Caco-2 (cell line): ENCODE measurements at regions of chr17 and their contacts with region 1.

Region 1: DNA sequence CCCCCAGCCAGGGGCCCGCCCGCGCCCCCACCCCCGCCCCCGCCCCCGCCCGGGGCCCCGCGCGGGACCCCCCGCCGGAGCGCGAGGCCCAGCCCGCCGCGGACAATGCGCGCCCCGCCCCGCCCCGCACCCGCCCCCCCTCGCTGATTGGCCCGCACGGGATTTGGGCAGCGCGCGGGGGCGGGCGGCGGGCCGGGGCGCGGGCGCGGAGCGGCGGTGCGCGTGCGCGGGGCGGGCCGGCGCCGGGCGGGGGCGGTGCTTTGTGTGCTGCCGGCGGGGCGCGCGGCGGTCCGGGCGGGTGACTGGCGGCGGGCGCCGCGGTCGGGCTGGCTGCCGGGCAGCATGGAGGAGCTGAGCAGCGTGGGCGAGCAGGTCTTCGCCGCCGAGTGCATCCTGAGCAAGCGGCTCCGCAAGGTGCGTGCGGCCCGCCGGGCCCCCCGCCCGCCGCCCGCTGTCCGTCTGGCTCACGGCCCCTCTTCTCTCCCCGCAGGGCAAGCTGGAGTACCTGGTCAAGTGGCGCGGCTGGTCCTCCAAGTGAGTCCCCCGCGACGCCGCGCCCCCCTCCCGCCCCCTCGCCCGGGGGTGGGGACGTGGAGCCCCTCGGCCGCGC is at the start of gene CBX2:
- DNase-seq: peak; percentile 76 to 92
- H3K4me3 ChIP-seq: peak within 1 kb of the TSS; percentile 88
- H3K4me3 Mint-ChIP-seq: peak within 1 kb of the TSS; percentile 99
- H3K27ac Mint-ChIP-seq: peak within 1 kb of the TSS; percentile 75
- H3K4me1 ChIP-seq: peaks cover 19% of the 10 kb centered on the region
- H3K4me1 Mint-ChIP-seq: peaks cover 22% of the 10 kb centered on the region
- H3K27me3 ChIP-seq: no peaks in the 10 kb centered on the region
- H3K27me3 Mint-ChIP-seq: no peaks in the 10 kb centered on the region
- CTCF ChIP-seq: no peak
- total RNA-seq, gene CBX2: 50.0 and 52.8 TPM in 2 replicates

Region 2: DNA sequence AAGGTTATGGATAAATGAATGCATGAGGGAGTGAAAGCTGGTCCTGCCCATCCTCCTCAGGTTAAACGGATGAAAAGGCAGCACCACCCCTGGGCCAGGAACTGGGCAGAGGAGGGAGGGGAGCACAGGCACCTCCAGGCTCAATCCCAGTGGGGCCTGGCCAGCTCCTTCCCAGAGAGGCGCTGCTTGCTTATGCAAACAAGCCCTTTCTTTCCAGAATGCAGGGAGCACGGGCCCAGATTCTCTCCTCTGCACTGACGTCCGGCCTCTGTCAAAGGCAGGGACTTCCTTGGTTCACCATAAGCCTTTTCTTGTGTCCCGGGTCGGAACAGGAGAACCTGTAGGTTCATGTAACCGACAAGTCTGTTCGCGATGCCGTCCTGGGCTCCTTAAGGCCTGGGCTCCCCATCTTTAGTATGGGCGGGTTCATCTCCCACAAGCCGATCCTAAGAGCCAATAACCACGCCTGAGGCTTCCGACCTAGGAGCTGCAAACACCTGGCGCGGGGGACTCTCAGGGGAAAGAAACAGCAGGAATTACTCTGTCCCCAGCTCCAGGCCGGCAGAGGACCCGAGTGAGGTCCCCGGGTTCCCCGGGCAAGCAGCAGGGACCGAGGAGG is 31.0 kb before region 1 on chr17:
- CTCF ChIA-PET with region 1: interaction called, 25 read pairs
- POLR2A ChIA-PET with region 1: interaction called, 9 read pairs
- intact Hi-C with region 1: loop called (anchors 1 kb)
- DNase-seq: no peak
- H3K4me3 ChIP-seq: no peak overlapping the region
- H3K4me3 Mint-ChIP-seq: no peak overlapping the region
- H3K27ac Mint-ChIP-seq: no peak overlapping the region
- H3K4me1 ChIP-seq: peaks cover 39% of the 10 kb centered on the region
- H3K4me1 Mint-ChIP-seq: peaks cover 10% of the 10 kb centered on the region
- H3K27me3 ChIP-seq: no peaks in the 10 kb centered on the region
- H3K27me3 Mint-ChIP-seq: no peaks in the 10 kb centered on the region
- CTCF ChIP-seq: no peak